ENCODE measurements at regions of chr18 and their contacts with region 1.

Region 1: DNA sequence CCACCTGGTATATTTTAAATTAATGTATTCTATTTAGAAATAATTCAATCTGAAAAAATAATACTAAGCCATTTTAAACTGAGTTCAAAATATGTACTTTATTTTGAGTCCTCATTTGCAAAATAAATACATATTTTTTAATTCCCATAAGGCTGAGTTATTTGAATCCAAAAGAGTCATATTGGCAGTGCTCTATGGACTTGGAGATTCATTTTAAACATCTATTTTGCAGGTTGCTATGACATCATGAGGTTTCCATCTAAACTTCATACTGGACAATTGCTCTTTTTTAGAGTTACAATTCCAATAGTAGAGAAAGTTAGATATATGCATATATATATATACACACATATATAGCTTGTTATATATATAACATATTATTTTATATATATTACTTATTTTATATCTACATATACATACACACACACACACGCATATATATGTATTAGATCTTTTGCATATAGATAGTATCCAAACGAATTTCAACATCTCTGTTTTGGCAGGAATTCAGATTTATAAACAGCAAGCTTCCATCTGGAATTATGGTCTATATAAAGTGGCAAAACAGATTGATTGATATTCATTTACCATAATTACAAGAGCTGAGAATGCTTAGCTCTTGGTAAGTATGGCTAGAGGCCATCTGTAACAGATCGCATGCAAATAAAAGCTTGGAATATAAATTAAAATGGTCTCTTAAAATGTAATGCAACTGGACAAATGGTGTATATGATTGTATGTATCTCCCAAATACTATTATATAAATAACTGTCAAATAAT is 34.9 kb downstream of the NOL4 start:
- DNase-seq: no peak
- ATAC-seq: no peak
- H3K4me3 ChIP-seq: no peak overlapping the region
- H3K27ac ChIP-seq: no peak overlapping the region
- H3K4me1 ChIP-seq: no peaks in the 10 kb centered on the region
- H3K27me3 ChIP-seq: no peaks in the 10 kb centered on the region
- CTCF ChIP-seq: no peak
- POLR2A ChIP-seq: no peak
- RAD21 ChIP-seq: no peak

Region 2: DNA sequence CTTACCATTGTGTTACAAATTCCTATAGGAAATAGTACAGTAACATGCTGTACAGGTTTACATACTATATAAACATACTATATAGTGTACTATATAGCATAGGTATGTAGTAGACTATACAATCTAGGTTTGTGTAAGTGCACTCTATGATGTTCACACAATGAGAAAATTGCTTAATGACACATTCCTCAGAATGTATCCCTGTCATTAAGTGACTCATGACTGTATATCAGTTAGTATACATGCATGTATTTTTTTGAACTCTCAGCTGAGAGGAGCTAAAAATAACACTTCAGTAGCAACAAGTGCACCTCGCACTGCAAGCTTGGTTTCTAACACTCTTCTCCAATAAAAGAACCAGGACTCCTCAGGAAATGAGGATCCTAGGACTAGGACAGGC is 631.3 kb before region 1 on chr18:
- CTCF ChIA-PET with region 1: no interaction called
- POLR2A ChIA-PET with region 1: interaction called, 14 read pairs
- dilution Hi-C with region 1: no loop called
- in situ Hi-C with region 1: no loop called
- intact Hi-C with region 1: no loop called
- DNase-seq: no peak
- ATAC-seq: no peak
- H3K4me3 ChIP-seq: no peak overlapping the region
- H3K27ac ChIP-seq: no peak overlapping the region
- H3K4me1 ChIP-seq: peaks cover 2% of the 10 kb centered on the region; the same call in 1 of the 2 replicates
- H3K27me3 ChIP-seq: no peaks in the 10 kb centered on the region
- CTCF ChIP-seq: no peak
- POLR2A ChIP-seq: no peak
- RAD21 ChIP-seq: no peak

Region 3: DNA sequence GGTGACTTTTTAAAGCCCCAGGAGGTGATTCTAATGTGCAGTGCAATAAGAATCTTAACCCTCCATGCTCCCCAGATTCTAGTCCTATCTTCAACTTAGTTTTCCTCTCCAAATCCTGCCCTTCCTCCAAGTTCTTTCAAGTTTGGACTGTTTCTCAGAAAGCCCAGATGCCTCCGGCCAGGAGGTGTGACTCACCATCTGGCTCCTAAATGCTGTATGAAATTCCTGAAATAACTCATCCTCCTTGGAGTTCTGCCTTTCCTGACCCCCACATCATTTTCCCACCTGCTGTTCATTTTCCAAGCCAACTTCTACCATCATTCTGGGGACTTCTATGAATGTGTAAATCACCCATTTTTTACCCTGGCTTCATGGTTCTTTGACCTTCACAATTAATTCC is 153.1 kb after region 1 on chr18:
- CTCF ChIA-PET with region 1: no interaction called
- POLR2A ChIA-PET with region 1: no interaction called
- dilution Hi-C with region 1: no loop called
- in situ Hi-C with region 1: no loop called
- intact Hi-C with region 1: no loop called
- DNase-seq: peak; percentile 28
- ATAC-seq: peak; percentile 24; the same call in 1 of the 2 replicates
- H3K4me3 ChIP-seq: no peak overlapping the region
- H3K27ac ChIP-seq: no peak overlapping the region
- H3K4me1 ChIP-seq: no peaks in the 10 kb centered on the region
- H3K27me3 ChIP-seq: no peaks in the 10 kb centered on the region
- CTCF ChIP-seq: no peak
- POLR2A ChIP-seq: no peak
- RAD21 ChIP-seq: no peak

Measured in IMR-90 (cell line).